ENCODE measurements at regions of chr7 and their contacts with region 1.

Region 1: GRCh38 chr7:116331020-116331419 is 120.7 kb downstream of the TES start:
- DNase-seq: peak; percentile 96
- H3K4me3 ChIP-seq: no peak overlapping the region
- H3K27ac ChIP-seq: peak overlapping the region; percentile 86
- H3K4me1 ChIP-seq: peaks cover 40% of the 10 kb centered on the region
- H3K27me3 ChIP-seq: no peaks in the 10 kb centered on the region
- CTCF ChIP-seq: no peak

Region 2: GRCh38 chr7:116122972-116123595 is 207.9 kb before region 1 on chr7:
- CTCF ChIA-PET with region 1: no interaction called
- POLR2A ChIA-PET with region 1: no interaction called
- intact Hi-C with region 1: no loop called
- DNase-seq: peak; percentile 63
- H3K4me3 ChIP-seq: no peak overlapping the region
- H3K27ac ChIP-seq: no peak overlapping the region
- H3K4me1 ChIP-seq: no peaks in the 10 kb centered on the region
- H3K27me3 ChIP-seq: no peaks in the 10 kb centered on the region
- CTCF ChIP-seq: peak; percentile 85

Region 3: GRCh38 chr7:116138202-116138801 is 192.7 kb before region 1 on chr7:
- CTCF ChIA-PET with region 1: no interaction called
- POLR2A ChIA-PET with region 1: no interaction called
- intact Hi-C with region 1: no loop called
- DNase-seq: peak; percentile 83
- H3K4me3 ChIP-seq: no peak overlapping the region
- H3K27ac ChIP-seq: no peak overlapping the region
- H3K4me1 ChIP-seq: peaks cover 9% of the 10 kb centered on the region
- H3K27me3 ChIP-seq: no peaks in the 10 kb centered on the region
- CTCF ChIP-seq: peak; percentile 88

Region 4: GRCh38 chr7:116348331-116348730 is 17.3 kb after region 1 on chr7:
- CTCF ChIA-PET with region 1: no interaction called
- POLR2A ChIA-PET with region 1: no interaction called
- intact Hi-C with region 1: no loop called
- DNase-seq: no peak
- H3K4me3 ChIP-seq: no peak overlapping the region
- H3K27ac ChIP-seq: no peak overlapping the region
- H3K4me1 ChIP-seq: no peaks in the 10 kb centered on the region
- H3K27me3 ChIP-seq: no peaks in the 10 kb centered on the region
- CTCF ChIP-seq: no peak

Region 5: DNA sequence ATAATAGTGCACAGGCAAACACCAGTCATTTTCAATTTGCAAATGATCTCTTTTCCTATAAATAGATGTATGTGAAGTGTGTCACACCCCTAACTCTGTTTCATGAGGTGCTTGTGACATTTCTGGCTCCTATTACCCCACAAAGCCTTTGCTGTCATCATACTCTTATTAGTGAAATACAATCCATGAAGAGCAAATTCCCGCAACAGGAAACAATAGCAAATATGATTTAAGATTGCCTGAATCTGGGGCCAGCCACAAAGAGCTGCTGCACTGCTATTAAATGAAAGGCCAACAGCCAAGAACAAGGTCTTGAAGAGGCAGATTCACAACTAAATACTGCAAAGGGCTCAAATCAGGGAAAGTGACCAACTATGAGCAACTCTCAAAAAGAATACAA is 72.2 kb after region 1 on chr7:
- CTCF ChIA-PET with region 1: no interaction called
- POLR2A ChIA-PET with region 1: no interaction called
- intact Hi-C with region 1: no loop called
- DNase-seq: peak; percentile 41
- H3K4me3 ChIP-seq: no peak overlapping the region
- H3K27ac ChIP-seq: peak overlapping the region; percentile 77
- H3K4me1 ChIP-seq: peaks cover 42% of the 10 kb centered on the region
- H3K27me3 ChIP-seq: no peaks in the 10 kb centered on the region
- CTCF ChIP-seq: no peak

Region 6: GRCh38 chr7:116582164-116582732 is 251.2 kb after region 1 on chr7:
- CTCF ChIA-PET with region 1: no interaction called
- POLR2A ChIA-PET with region 1: interaction called, 14 read pairs
- intact Hi-C with region 1: loop called (anchors 10 kb)
- DNase-seq: peak; percentile 55
- H3K4me3 ChIP-seq: no peak overlapping the region
- H3K27ac ChIP-seq: peak overlapping the region; percentile 56
- H3K4me1 ChIP-seq: peaks cover 37% of the 10 kb centered on the region
- H3K27me3 ChIP-seq: no peaks in the 10 kb centered on the region
- CTCF ChIP-seq: no peak; the same call in 1 of the 2 replicates

Measured in A673 (cell line).